AG04449 (cell line): ENCODE measurements at regions of chr20 and their contacts with region 1.

Region 1: DNA sequence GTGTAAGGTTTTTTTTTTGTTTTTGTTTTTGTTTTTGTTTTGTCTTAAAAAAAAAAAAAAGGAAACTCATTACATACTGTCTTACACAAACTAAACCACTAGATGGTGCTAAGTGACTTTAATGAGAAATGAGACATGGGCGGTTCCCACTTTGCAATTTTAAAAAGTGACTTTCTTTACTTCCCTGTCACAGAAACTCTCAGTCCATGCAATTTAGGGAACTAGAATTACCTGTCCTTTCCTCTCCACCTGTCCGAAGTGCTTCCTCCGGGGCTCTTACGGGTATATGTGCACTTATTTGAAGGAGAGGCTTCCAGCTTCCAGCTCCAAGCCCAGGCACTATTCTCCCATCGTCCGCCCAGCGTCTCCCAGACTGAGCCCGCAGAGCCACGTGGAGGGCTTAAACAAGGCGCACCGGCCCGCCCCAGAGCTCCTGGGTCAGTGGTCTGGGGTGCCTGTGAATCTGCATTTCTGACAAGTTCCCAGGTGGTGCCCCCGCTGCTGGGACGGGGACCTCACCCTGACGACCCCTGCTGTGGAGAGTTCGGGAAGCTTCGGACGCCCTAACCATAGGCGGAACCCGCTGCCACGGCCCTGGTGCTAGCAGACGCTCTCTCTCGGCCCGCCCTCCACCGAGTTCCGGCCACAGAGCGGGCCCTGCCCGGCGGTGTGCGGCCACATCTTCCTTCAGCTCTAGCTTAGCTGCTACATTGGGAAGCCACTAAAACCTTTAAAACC is 26.1 kb downstream of the BFSP1 start:
- DNase-seq: no peak
- H3K4me3 ChIP-seq: peak overlapping the region; percentile 61
- CTCF ChIP-seq: peak; percentile 30

Region 2: DNA sequence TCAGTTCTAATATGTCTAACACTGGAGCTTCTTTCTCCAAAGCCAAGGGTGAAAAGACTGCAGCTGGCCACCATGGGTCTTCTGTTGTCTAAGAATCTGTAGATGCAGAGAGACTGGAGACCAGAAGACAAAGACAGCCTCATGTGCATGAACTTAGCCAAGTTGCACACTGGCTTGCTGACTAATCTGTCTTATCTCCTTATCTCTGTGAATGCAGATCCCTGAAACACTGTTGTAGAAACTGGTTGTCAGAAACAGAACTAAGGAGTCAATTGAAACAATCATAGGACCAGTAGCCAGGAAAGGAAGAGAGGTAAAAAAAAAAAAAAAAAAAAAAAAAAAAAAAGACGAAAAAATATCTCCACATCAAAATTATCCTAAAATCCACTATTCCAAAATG is 83.6 kb before region 1 on chr20:
- CTCF ChIA-PET with region 1: no interaction called
- POLR2A ChIA-PET with region 1: no interaction called
- DNase-seq: no peak
- H3K4me3 ChIP-seq: no peak overlapping the region
- CTCF ChIP-seq: no peak

Region 3: DNA sequence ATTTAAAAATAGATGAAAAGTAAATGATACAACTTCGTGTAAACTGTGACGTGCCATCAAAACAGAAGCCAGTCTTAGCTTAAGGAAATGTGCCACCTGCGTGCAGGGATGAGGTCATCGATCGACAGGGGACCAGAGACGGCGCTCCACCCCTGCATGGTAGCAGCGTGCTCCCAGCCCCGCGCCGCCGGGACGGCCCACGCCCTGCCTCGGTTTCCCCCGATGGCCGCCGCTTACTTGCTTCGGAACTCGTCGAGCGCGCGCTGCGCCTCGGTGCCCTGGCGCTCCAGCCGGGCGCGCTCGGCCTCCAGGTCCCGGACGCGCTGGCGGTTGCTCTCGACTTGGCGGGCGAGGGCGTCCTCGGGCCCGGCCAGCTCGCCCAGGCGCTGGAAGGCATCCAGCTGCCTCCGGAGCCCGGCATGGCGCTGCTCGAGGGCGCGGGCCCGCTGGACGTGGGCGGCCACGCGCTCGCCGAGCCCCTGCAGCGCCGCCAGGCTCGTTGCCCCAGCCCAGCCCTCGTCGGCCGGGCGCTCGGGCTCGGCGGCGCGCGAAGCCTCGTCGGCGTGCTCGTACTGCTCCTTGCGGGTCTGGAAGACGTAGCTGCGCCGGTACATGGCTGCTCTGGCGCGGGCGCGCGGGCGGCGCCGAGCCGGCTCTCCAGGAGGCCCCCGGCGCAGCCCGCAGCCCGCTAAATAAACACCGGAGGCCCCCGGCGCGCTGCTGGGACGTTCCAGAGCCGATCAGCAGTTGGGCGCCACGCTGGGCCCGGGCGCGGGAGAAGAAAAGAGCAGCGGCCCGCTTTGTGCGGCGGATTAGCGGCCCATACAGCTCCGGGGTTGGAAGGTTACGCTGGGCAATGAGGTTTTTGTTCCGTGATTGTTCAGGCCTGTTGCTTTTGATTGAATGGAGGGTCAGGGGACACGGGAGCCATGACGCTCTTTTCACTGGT is 25.9 kb after region 1 on chr20 and contains the start of gene BFSP1:
- CTCF ChIA-PET with region 1: interaction called, 11 read pairs
- POLR2A ChIA-PET with region 1: no interaction called
- DNase-seq: no peak
- H3K4me3 ChIP-seq: peak within 1 kb of the TSS; percentile 60
- CTCF ChIP-seq: no peak

Region 4: DNA sequence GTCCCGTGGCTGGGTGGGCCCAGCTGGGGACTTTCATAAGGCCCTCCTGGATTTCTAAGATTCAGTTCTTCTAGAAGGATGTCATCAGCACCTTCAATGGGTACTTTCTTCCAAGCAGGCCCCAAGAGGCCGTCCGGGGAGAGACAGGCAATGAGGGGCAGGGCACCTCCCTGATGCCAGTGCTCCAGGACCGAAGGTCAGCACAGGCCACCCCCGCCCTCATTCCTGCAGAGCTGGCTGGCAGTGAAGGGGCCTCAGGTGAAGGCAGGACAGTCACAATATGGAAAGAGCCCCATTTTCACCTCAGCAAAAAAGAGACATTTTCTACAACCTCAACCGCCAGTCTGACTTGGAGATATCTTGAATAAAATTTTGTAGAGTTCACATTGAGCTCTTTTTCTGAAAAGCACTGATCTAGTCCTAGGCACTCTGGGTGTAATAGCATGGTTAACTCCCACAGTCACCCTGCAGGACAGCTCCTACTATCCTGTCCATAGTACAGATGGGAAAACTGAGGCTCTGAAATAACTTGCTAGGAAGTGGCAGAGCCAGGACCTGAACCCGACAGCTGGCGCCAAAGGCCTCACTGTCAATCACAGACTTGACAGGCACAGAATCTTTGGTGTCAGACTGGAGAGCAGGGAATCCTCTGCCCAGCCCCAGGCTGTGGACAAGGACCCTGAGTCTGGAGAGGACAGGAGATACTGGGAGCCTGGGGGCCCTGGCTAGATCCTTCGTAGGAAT is 126.7 kb after region 1 on chr20:
- CTCF ChIA-PET with region 1: interaction called, 11 read pairs
- POLR2A ChIA-PET with region 1: no interaction called
- DNase-seq: no peak
- H3K4me3 ChIP-seq: no peak overlapping the region
- CTCF ChIP-seq: no peak

Region 5: GRCh38 chr20:17648791-17649730 is 144.0 kb after region 1 on chr20:
- CTCF ChIA-PET with region 1: interaction called, 27 read pairs
- POLR2A ChIA-PET with region 1: no interaction called
- DNase-seq: no peak
- H3K4me3 ChIP-seq: no peak overlapping the region
- CTCF ChIP-seq: no peak

Region 6: DNA sequence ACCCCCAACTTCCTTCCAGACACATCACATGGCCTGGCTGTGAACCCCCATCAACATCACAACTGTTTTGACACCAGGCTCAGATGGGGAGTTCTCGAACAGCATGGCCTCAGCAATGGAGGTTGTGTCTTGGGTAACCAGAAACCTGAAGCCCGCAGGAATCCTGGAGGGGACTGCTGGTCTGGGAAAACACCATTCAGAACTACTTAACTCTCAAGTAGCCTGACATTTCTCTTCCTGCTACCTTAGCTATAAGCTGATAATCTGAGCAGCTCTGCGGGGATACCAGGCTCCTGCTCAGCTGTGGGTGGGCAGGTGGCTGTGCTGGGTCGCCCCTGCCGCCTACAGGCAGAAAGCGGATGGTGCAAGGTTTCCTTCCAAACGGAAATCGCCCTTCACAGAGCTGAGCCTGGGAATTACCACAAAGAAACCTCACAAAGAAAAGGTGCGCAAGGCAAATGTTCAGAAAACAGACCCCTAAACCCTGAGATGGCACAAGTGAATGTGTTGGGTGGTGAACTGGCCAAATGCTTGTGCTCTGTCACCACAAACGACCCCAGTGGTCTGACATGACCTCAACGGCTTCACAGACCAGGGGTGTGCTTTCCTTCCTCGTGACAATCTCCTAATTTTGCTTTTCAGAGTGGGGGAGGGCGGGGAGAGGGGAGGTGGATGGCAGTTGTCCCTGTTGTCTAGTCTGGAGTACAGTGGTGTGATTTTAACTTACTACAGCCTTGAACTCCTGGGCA is 434.0 kb after region 1 on chr20:
- CTCF ChIA-PET with region 1: interaction called, 32 read pairs
- POLR2A ChIA-PET with region 1: no interaction called
- DNase-seq: no peak
- H3K4me3 ChIP-seq: no peak overlapping the region
- CTCF ChIP-seq: peak; percentile 92

Region 7: GRCh38 chr20:18276821-18277220 is 771.8 kb after region 1 on chr20:
- CTCF ChIA-PET with region 1: interaction called, 13 read pairs
- POLR2A ChIA-PET with region 1: no interaction called
- DNase-seq: no peak
- H3K4me3 ChIP-seq: no peak overlapping the region
- CTCF ChIP-seq: peak; percentile 88